CD4-positive, alpha-beta memory T cell (primary cell): ENCODE measurements at regions of chr2 and their contacts with region 1.

Region 1: GRCh38 chr2:101697124-101698013 is at the start of gene MAP4K4:
- DNase-seq: peak; percentile 65 to 85 (median 69)
- H3K4me3 ChIP-seq: peak within 1 kb of the TSS; percentile 66 to 86
- H3K4me3 Mint-ChIP-seq: peak within 1 kb of the TSS; percentile 92 to 96 (median 94)
- H3K27ac ChIP-seq: peak within 1 kb of the TSS; percentile 66
- H3K27ac Mint-ChIP-seq: peak within 1 kb of the TSS; percentile 89 to 98 (median 95)
- H3K4me1 ChIP-seq: peaks cover 44% of the 10 kb centered on the region
- H3K4me1 Mint-ChIP-seq: peaks cover 14 to 30% (median 20%) of the 10 kb centered on the region in 4 donors
- H3K27me3 ChIP-seq: no peaks in the 10 kb centered on the region
- H3K27me3 Mint-ChIP-seq: no peaks in the 10 kb centered on the region
- total RNA-seq, gene MAP4K4: 105 to 114 TPM

Region 2: GRCh38 chr2:101308432-101309210 is 388.7 kb before region 1 on chr2 and contains the start of gene RNF149:
- CTCF ChIA-PET with region 1: no interaction called
- POLR2A ChIA-PET with region 1: interaction called, 3 read pairs
- intact Hi-C with region 1: loop called (anchors 2 kb)
- DNase-seq: peak; percentile 89 to 92 (median 90)
- H3K4me3 ChIP-seq: peak within 1 kb of the TSS; percentile 68 to 92
- H3K4me3 Mint-ChIP-seq: peak within 1 kb of the TSS; percentile 93 to 100 (median 100)
- H3K27ac ChIP-seq: peak within 1 kb of the TSS; percentile 86
- H3K27ac Mint-ChIP-seq: peak within 1 kb of the TSS; percentile 96 to 100 (median 99)
- H3K4me1 ChIP-seq: peaks cover 72% of the 10 kb centered on the region
- H3K4me1 Mint-ChIP-seq: peaks cover 53 to 95% (median 67%) of the 10 kb centered on the region in 4 donors
- H3K27me3 ChIP-seq: no peaks in the 10 kb centered on the region
- H3K27me3 Mint-ChIP-seq: no peaks in the 10 kb centered on the region
- total RNA-seq, gene RNF149: 138 to 154 TPM

Region 3: DNA sequence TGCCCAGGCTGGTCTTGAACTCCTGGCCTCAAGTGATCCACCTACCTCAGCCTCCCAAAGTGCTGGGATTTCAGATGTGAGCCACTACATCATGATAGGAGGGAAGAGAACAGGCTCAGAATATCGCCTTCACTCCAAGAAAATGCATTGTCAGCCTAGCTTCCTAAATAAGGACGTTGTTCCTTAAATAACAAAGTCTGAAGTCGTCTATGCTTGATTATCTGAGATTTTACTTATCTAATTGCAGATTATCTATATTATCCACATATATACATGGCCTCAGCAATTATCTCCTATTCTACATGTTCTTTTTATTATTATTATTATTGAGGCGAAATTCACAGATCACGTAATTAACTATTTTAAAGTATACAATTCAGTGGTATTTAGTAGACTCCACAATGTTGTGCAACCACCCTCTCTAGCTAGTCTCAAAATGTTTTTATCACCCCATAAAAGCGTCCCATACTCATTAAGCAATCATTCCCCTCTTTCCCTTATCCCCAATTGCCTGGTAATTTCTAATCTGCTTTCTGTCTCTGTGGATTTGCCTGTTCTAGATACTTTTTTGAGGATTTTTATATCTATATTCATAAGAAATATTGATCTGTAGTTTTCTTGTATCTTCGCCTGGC is 127.4 kb before region 1 on chr2:
- CTCF ChIA-PET with region 1: interaction called, 4 read pairs
- POLR2A ChIA-PET with region 1: interaction called, 8 read pairs
- intact Hi-C with region 1: loop called (anchors 2 kb)
- DNase-seq: no peak
- H3K4me3 ChIP-seq: no peak overlapping the region
- H3K4me3 Mint-ChIP-seq: peak overlapping the region in 6 of 8 donors; percentile 73 to 92 (median 82)
- H3K27ac ChIP-seq: peak overlapping the region; percentile 29
- H3K27ac Mint-ChIP-seq: peak overlapping the region in 6 of 7 donors; percentile 82 to 96 (median 92)
- H3K4me1 ChIP-seq: peaks cover 19% of the 10 kb centered on the region
- H3K4me1 Mint-ChIP-seq: peaks cover 18 to 62% (median 44%) of the 10 kb centered on the region in 4 donors
- H3K27me3 ChIP-seq: no peaks in the 10 kb centered on the region
- H3K27me3 Mint-ChIP-seq: no peaks in the 10 kb centered on the region

Region 4: GRCh38 chr2:101710471-101711318 is 13.3 kb after region 1 on chr2:
- CTCF ChIA-PET with region 1: interaction called, 16 read pairs
- POLR2A ChIA-PET with region 1: interaction called, 171 read pairs
- intact Hi-C with region 1: loop called (anchors 1 kb)
- DNase-seq: peak in 1 of 5 donors; percentile 28
- H3K4me3 ChIP-seq: peak overlapping the region in 1 of 2 donors; percentile 0
- H3K4me3 Mint-ChIP-seq: peak overlapping the region in 7 of 8 donors; percentile 38 to 65 (median 55)
- H3K27ac ChIP-seq: peak overlapping the region; percentile 10
- H3K27ac Mint-ChIP-seq: peak overlapping the region; percentile 30 to 91 (median 89)
- H3K4me1 ChIP-seq: peaks cover 96% of the 10 kb centered on the region
- H3K4me1 Mint-ChIP-seq: peaks cover 48 to 80% (median 58%) of the 10 kb centered on the region in 4 donors
- H3K27me3 ChIP-seq: no peaks in the 10 kb centered on the region
- H3K27me3 Mint-ChIP-seq: no peaks in the 10 kb centered on the region

Region 5: DNA sequence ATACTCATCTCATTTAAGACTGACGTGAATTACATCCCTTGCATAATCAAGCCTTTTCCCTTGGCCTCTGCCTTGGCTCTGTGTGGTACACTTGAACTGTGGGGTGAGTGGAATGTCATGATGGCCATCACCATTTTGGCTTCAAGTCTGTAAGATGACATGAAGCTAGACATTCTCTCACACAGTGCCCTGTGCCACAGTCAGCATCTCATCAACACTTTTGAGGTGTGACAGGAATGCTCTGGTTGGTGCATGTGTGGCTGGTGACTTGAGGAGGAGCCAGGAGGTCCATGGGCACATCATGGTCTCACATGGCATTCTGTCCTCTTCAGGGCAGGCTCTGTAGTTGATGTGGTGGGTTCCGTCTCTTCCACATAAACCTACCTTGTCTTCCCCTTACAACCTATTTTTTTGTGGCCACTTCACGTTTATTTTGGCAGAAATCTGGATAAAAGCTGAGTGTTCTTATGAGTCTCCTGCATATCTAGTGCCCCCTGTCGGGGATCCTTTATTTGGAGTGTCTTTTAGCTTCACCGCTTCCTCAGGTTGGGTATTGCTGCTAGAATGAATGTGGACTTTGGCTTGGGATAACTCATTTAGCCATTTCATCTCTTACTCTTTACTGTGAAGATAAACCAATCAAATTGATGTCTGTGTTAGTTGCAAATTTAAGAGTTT is 28.3 kb after region 1 on chr2:
- CTCF ChIA-PET with region 1: interaction called, 23 read pairs
- POLR2A ChIA-PET with region 1: interaction called, 171 read pairs
- intact Hi-C with region 1: no loop called
- DNase-seq: peak in 2 of 5 donors; percentile 27 to 39
- H3K4me3 ChIP-seq: no peak overlapping the region
- H3K4me3 Mint-ChIP-seq: peak overlapping the region in 3 of 8 donors; percentile 17 to 39 (median 34)
- H3K27ac ChIP-seq: no peak overlapping the region
- H3K27ac Mint-ChIP-seq: peak overlapping the region in 4 of 7 donors; percentile 12 to 66 (median 24)
- H3K4me1 ChIP-seq: peaks cover 89% of the 10 kb centered on the region
- H3K4me1 Mint-ChIP-seq: peaks cover 70 to 99% (median 85%) of the 10 kb centered on the region in 4 donors
- H3K27me3 ChIP-seq: no peaks in the 10 kb centered on the region
- H3K27me3 Mint-ChIP-seq: no peaks in the 10 kb centered on the region